Tibial artery (tissue), 4 donors: ENCODE measurements at regions of chr5 and their contacts with region 1.

Region 1: DNA sequence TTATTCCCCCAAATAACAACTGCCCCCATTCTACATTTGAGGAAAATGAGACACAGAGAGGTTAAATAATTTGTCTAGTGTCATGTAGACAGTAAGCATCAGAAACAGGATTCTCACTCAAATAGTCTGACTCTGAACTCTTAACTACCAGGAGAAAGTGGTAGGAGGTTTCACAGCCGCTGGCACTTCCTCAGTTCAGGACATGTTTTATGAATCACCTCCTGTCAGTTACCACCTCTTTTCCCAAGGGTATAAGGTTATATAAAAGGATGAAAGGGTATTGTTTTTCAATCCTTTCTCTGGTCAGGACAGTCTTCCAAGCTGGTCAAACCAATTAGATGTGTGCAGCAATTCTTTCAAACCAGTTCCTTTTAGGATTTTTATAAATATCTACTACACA is 52.1 kb downstream of the TSSK1B start:
- DNase-seq: no peak
- H3K4me3 ChIP-seq: no peak overlapping the region
- H3K27ac ChIP-seq: no peak overlapping the region
- H3K4me1 ChIP-seq: peaks cover 0 to 6% (median 0%) of the 10 kb centered on the region in 4 donors
- H3K27me3 ChIP-seq: no peaks in the 10 kb centered on the region
- CTCF ChIP-seq: no peak

Region 2: GRCh38 chr5:113043491-113043931 is 339.2 kb before region 1 on chr5:
- intact Hi-C with region 1: no loop called
- DNase-seq: no peak
- H3K4me3 ChIP-seq: no peak overlapping the region
- H3K27ac ChIP-seq: no peak overlapping the region
- H3K4me1 ChIP-seq: no peaks in the 10 kb centered on the region
- H3K27me3 ChIP-seq: no peaks in the 10 kb centered on the region
- CTCF ChIP-seq: peak in 1 of 2 experiments; percentile 21

Region 3: DNA sequence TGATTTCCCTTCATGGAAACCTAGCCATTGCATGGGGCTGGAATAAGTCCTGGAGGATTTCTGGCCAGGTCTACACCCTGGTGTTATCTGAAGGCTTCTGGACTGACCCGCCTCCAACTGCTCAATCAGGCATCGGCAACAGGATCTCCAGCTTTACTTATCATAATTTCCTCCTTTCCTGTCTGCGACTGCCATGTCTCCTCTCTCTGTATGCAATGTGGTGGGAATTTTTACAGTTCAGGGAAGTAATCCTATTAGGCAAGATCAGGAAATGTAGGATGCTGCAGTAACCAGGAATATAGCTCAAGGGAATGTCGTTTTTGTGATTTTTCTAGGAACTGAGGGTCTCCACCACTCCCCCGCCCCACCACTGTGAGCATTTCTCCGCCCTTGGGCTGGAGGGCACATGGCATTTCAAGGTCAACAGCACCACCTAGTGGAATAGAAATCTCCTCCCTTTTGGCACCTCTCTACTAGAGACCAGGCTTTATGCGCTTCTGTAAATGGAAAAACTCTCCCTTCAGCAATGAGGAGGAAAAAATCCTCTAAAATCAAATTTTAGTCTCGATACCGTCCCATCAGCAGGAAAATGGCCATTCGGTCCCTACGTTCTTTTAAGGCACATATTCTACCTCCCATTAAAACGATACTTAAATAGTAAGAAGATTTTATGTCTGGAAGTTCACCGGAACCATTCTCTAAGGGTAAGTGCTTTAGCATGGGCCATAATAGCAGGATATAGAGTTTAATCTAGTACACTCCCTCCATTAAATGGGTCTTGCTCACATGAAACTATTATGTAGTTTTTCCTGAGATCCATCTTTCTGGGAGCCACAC is 223.8 kb after region 1 on chr5:
- intact Hi-C with region 1: loop called (anchors 10 kb)
- DNase-seq: peak in 1 of 2 donors; percentile 41
- H3K4me3 ChIP-seq: no peak overlapping the region
- H3K27ac ChIP-seq: no peak overlapping the region
- H3K4me1 ChIP-seq: no peaks in the 10 kb centered on the region
- H3K27me3 ChIP-seq: peaks cover 0 to 20% of the 10 kb centered on the region in 2 donors
- CTCF ChIP-seq: peak; percentile 59 to 68